ENCODE measurements at regions of chr1 and their contacts with region 1.

Region 1: GRCh38 chr1:24201941-24202440 is 14.9 kb upstream of the IFNLR1 start:
- DNase-seq: peak; percentile 69
- ATAC-seq: peak; percentile 32
- H3K4me3 ChIP-seq: no peak overlapping the region
- H3K4me3 Mint-ChIP-seq: no peak overlapping the region
- H3K27ac ChIP-seq: no peak overlapping the region
- H3K27ac Mint-ChIP-seq: no peak overlapping the region
- H3K4me1 ChIP-seq: peaks cover 10 to 33% of the 10 kb centered on the region in 2 donors
- H3K4me1 Mint-ChIP-seq: peaks cover 29% of the 10 kb centered on the region
- H3K27me3 ChIP-seq: peaks cover 0 to 4% (median 0%) of the 10 kb centered on the region in 4 experiments
- H3K27me3 Mint-ChIP-seq: no peaks in the 10 kb centered on the region
- CTCF ChIP-seq: peak; percentile 82

Region 2: GRCh38 chr1:23995431-23995837 is 206.6 kb before region 1 on chr1:
- CTCF ChIA-PET with region 1: no interaction called
- POLR2A ChIA-PET with region 1: no interaction called
- intact Hi-C with region 1: no loop called
- DNase-seq: no peak
- ATAC-seq: no peak
- H3K4me3 ChIP-seq: no peak overlapping the region
- H3K4me3 Mint-ChIP-seq: no peak overlapping the region
- H3K27ac ChIP-seq: no peak overlapping the region
- H3K27ac Mint-ChIP-seq: no peak overlapping the region
- H3K4me1 ChIP-seq: no peaks in the 10 kb centered on the region
- H3K4me1 Mint-ChIP-seq: peaks cover 10% of the 10 kb centered on the region
- H3K27me3 ChIP-seq: no peaks in the 10 kb centered on the region
- H3K27me3 Mint-ChIP-seq: no peaks in the 10 kb centered on the region
- CTCF ChIP-seq: no peak

Region 3: GRCh38 chr1:24070821-24071393 is 131.1 kb before region 1 on chr1:
- CTCF ChIA-PET with region 1: interaction called, 25 read pairs
- POLR2A ChIA-PET with region 1: no interaction called
- intact Hi-C with region 1: no loop called
- DNase-seq: peak; percentile 82
- ATAC-seq: peak; percentile 88
- H3K4me3 ChIP-seq: no peak overlapping the region
- H3K4me3 Mint-ChIP-seq: no peak overlapping the region
- H3K27ac ChIP-seq: no peak overlapping the region
- H3K27ac Mint-ChIP-seq: no peak overlapping the region
- H3K4me1 ChIP-seq: peaks cover 0 to 3% of the 10 kb centered on the region in 2 donors
- H3K4me1 Mint-ChIP-seq: peaks cover 4% of the 10 kb centered on the region
- H3K27me3 ChIP-seq: peaks cover 0 to 4% (median 1%) of the 10 kb centered on the region in 4 experiments
- H3K27me3 Mint-ChIP-seq: peaks cover 8% of the 10 kb centered on the region
- CTCF ChIP-seq: peak; percentile 93

Region 4: GRCh38 chr1:24157918-24158481 is 44.0 kb before region 1 on chr1:
- CTCF ChIA-PET with region 1: interaction called, 237 read pairs
- POLR2A ChIA-PET with region 1: interaction called, 3 read pairs
- intact Hi-C with region 1: no loop called
- DNase-seq: no peak
- ATAC-seq: no peak
- H3K4me3 ChIP-seq: no peak overlapping the region
- H3K4me3 Mint-ChIP-seq: no peak overlapping the region
- H3K27ac ChIP-seq: no peak overlapping the region
- H3K27ac Mint-ChIP-seq: no peak overlapping the region
- H3K4me1 ChIP-seq: peaks cover 0 to 4% of the 10 kb centered on the region in 2 donors
- H3K4me1 Mint-ChIP-seq: peaks cover 16% of the 10 kb centered on the region
- H3K27me3 ChIP-seq: no peaks in the 10 kb centered on the region
- H3K27me3 Mint-ChIP-seq: no peaks in the 10 kb centered on the region
- CTCF ChIP-seq: no peak

Region 5: DNA sequence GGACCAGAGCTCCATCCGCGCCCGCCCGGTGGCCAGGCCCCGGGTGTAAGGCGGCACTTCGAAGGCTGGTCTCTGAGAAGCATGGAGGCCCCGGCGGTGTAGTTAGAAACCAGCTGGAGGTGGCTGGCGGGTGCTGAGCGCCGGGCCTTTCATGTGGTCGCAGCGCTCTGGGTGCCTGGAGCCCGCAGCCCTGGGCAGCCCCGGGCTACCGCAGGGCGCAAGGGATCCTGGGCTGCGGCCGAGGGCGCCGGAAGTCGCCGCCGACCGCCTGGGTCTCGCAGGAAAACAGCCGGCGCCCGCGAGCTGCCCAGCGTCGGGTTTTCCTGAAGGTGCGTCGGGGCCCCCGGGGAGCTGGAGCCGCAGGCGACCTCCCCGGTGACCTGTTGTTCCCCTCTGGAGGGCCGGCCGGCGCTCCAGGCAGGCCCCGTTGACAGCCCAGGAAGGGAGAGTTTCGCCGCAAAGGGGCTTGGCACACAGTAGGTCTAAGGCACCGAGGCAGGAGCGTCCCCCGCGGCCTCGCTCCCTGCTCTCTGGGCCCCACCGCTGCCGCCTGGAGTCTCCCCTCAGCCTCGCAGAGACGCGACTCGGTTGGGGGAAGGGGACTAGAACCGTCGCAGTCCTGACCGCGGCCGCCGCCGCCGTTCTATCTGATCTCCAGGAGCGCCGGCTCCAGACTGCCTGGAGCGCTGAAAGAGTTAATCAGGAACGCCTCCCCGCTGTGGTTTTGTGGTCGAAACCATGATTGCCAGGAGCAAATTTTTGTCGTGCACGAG is 119.9 kb after region 1 on chr1:
- CTCF ChIA-PET with region 1: interaction called, 10 read pairs
- POLR2A ChIA-PET with region 1: no interaction called
- intact Hi-C with region 1: loop called (anchors 5 kb)
- DNase-seq: peak; percentile 70
- ATAC-seq: peak; percentile 72
- H3K4me3 ChIP-seq: peak overlapping the region; percentile 46 to 63 (median 59)
- H3K4me3 Mint-ChIP-seq: peak overlapping the region; percentile 87
- H3K27ac ChIP-seq: peak overlapping the region in 1 of 2 donors; percentile 25
- H3K27ac Mint-ChIP-seq: peak overlapping the region; percentile 23
- H3K4me1 ChIP-seq: peaks cover 35 to 37% of the 10 kb centered on the region in 2 donors
- H3K4me1 Mint-ChIP-seq: peaks cover 42% of the 10 kb centered on the region
- H3K27me3 ChIP-seq: peaks cover 0 to 75% (median 45%) of the 10 kb centered on the region in 4 experiments
- H3K27me3 Mint-ChIP-seq: peaks cover 65% of the 10 kb centered on the region
- CTCF ChIP-seq: no peak

Region 6: GRCh38 chr1:24391882-24392603 is 190.1 kb after region 1 on chr1:
- CTCF ChIA-PET with region 1: interaction called, 616 read pairs
- POLR2A ChIA-PET with region 1: interaction called, 11 read pairs
- intact Hi-C with region 1: loop called (anchors 1 kb)
- DNase-seq: peak; percentile 80
- ATAC-seq: peak; percentile 75
- H3K4me3 ChIP-seq: peak overlapping the region in 2 of 5 experiments; percentile 5 to 37
- H3K4me3 Mint-ChIP-seq: peak overlapping the region; percentile 81
- H3K27ac ChIP-seq: peak overlapping the region; percentile 81 to 92
- H3K27ac Mint-ChIP-seq: peak overlapping the region; percentile 92
- H3K4me1 ChIP-seq: peaks cover 26 to 33% of the 10 kb centered on the region in 2 donors
- H3K4me1 Mint-ChIP-seq: peaks cover 31% of the 10 kb centered on the region
- H3K27me3 ChIP-seq: no peaks in the 10 kb centered on the region
- H3K27me3 Mint-ChIP-seq: no peaks in the 10 kb centered on the region
- CTCF ChIP-seq: peak; percentile 74

Region 7: GRCh38 chr1:24421502-24421901 is 219.5 kb after region 1 on chr1:
- CTCF ChIA-PET with region 1: interaction called, 21 read pairs
- POLR2A ChIA-PET with region 1: no interaction called
- intact Hi-C with region 1: no loop called
- DNase-seq: no peak
- ATAC-seq: no peak
- H3K4me3 ChIP-seq: no peak overlapping the region
- H3K4me3 Mint-ChIP-seq: no peak overlapping the region
- H3K27ac ChIP-seq: no peak overlapping the region
- H3K27ac Mint-ChIP-seq: no peak overlapping the region
- H3K4me1 ChIP-seq: peaks cover 13% of the 10 kb centered on the region in 2 donors
- H3K4me1 Mint-ChIP-seq: peaks cover 19% of the 10 kb centered on the region
- H3K27me3 ChIP-seq: no peaks in the 10 kb centered on the region
- H3K27me3 Mint-ChIP-seq: no peaks in the 10 kb centered on the region
- CTCF ChIP-seq: no peak

Region 8: GRCh38 chr1:24642481-24643361 is 440.7 kb after region 1 on chr1 and contains the start of gene SRRM1:
- CTCF ChIA-PET with region 1: interaction called, 51 read pairs
- POLR2A ChIA-PET with region 1: interaction called, 3 read pairs
- intact Hi-C with region 1: no loop called
- DNase-seq: peak; percentile 100
- ATAC-seq: peak; percentile 90
- H3K4me3 ChIP-seq: peak within 1 kb of the TSS; percentile 81 to 99 (median 97)
- H3K4me3 Mint-ChIP-seq: peak within 1 kb of the TSS; percentile 96
- H3K27ac ChIP-seq: peak within 1 kb of the TSS; percentile 98 to 99
- H3K27ac Mint-ChIP-seq: peak within 1 kb of the TSS; percentile 99
- H3K4me1 ChIP-seq: peaks cover 17 to 25% of the 10 kb centered on the region in 2 donors
- H3K4me1 Mint-ChIP-seq: peaks cover 36% of the 10 kb centered on the region
- H3K27me3 ChIP-seq: no peaks in the 10 kb centered on the region
- H3K27me3 Mint-ChIP-seq: no peaks in the 10 kb centered on the region
- CTCF ChIP-seq: no peak
- total RNA-seq, gene SRRM1: 226 and 238 TPM in 2 replicates

Region 9: GRCh38 chr1:25989440-25990234 is 1787.6 kb after region 1 on chr1:
- CTCF ChIA-PET with region 1: no interaction called
- POLR2A ChIA-PET with region 1: no interaction called
- intact Hi-C with region 1: no loop called
- DNase-seq: no peak
- ATAC-seq: no peak
- H3K4me3 ChIP-seq: no peak overlapping the region
- H3K4me3 Mint-ChIP-seq: no peak overlapping the region
- H3K27ac ChIP-seq: no peak overlapping the region
- H3K27ac Mint-ChIP-seq: no peak overlapping the region
- H3K4me1 ChIP-seq: peaks cover 8 to 11% of the 10 kb centered on the region in 2 donors
- H3K4me1 Mint-ChIP-seq: peaks cover 11% of the 10 kb centered on the region
- H3K27me3 ChIP-seq: no peaks in the 10 kb centered on the region
- H3K27me3 Mint-ChIP-seq: no peaks in the 10 kb centered on the region
- CTCF ChIP-seq: no peak